PC-9 (cell line): ENCODE measurements at regions of chr12 and their contacts with region 1.

Region 1: DNA sequence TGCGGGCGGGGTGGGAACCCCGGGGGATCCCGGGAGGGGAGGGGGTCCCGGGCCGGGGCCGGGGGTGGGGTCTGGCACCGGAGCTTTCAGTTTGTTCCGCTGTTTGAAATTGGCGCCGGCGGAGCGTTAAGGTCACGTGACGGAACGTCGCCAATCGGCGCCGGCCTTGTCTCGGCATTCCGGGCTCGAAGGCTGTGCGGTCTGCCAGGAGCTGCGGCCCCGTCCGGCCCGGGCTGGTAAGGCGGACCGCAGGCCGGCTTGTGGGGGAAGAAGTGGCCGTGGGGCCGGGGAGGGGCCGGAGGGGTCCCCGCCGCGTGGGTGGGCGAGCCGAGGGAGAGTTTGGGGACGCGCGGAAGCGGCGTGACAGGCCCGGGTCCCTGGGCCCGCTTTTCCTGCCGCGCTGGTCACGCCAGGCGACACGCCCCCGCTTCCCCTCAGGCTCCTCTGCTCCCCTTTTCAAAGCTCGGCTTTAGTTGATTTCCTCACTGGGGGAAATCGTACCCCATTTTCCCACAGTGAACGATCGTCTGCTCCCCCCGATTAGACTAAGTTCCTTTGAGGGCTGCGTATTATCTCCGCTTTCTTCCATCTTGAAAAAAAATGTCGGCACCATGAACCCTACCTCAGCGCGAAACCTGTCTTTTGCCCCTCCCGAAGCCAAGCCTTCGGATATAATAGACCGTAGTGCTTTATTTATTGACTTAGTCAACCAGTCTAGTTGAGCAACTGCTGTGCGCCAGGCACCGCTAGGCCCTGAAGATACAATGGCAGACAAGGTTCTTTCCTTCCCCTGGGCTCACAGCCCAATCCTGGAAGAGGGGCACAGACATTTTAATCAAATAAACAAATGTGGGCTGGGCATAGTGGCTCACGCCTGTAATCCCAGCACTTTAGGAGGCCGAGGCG is at the starts of genes FOXM1 and RHNO1:
- DNase-seq: peak; percentile 90 to 94
- H3K4me3 ChIP-seq: peak within 1 kb of the TSS; percentile 71
- H3K27ac ChIP-seq: peak within 1 kb of the TSS; percentile 78
- H3K4me1 ChIP-seq: peaks cover 15% of the 10 kb centered on the region; the same call in 1 of the 2 replicates
- H3K27me3 ChIP-seq: no peaks in the 10 kb centered on the region
- CTCF ChIP-seq: no peak
- total RNA-seq, gene FOXM1: 161 and 225 TPM in 2 replicates
- total RNA-seq, gene RHNO1: 60.1 and 77.9 TPM in 2 replicates

Region 2: DNA sequence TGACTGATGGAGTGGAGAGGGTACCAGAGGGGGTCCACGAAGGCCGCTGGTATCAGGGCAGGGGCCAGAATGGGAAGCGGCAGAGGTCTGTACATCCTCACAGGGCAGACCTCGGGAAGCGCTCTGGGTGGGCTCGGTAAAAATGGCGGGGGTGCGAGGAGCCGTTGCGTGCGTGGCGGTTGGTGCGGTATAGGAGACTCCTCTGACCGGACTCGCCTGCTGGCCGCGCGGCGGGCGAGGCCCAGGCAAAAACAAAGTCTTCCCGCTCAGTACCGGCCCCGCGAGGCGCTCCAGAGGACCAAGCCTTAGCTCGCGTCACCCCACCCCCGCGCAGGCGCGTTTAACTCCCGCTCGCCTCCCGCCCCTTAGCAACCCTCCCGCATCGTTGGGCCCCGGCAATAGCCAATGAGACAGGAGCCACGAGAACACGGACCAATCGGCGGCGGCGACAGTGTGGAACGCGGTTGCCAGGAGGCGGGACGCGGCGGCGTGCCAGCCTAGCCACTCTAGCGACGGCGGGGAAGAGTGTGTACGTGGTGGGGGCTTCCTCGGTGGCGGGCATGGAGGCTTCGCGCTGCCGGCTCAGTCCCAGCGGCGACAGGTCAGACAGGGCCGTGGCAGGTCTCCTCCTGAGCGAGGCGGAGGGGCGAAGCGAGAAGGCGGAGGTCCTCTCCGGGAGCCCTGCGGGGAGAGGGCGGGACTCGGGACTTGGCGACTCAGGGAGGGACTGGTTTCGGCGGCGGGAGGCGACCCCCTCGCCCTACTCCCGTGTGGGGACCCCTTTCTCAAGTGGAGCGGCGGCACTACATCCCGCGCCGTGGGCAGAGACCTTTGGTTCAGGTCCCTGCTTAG is 13.3 kb after region 1 on chr12 and contains the start of gene TULP3:
- CTCF ChIA-PET with region 1: interaction called, 3 read pairs
- POLR2A ChIA-PET with region 1: no interaction called
- intact Hi-C with region 1: loop called (anchors 1 kb)
- DNase-seq: peak; percentile 93 to 99
- H3K4me3 ChIP-seq: peak within 1 kb of the TSS; percentile 80
- H3K27ac ChIP-seq: peak within 1 kb of the TSS; percentile 74
- H3K4me1 ChIP-seq: peaks cover 35% of the 10 kb centered on the region
- H3K27me3 ChIP-seq: no peaks in the 10 kb centered on the region
- CTCF ChIP-seq: no peak
- total RNA-seq, gene TULP3: 39.0 and 54.6 TPM in 2 replicates

Region 3: DNA sequence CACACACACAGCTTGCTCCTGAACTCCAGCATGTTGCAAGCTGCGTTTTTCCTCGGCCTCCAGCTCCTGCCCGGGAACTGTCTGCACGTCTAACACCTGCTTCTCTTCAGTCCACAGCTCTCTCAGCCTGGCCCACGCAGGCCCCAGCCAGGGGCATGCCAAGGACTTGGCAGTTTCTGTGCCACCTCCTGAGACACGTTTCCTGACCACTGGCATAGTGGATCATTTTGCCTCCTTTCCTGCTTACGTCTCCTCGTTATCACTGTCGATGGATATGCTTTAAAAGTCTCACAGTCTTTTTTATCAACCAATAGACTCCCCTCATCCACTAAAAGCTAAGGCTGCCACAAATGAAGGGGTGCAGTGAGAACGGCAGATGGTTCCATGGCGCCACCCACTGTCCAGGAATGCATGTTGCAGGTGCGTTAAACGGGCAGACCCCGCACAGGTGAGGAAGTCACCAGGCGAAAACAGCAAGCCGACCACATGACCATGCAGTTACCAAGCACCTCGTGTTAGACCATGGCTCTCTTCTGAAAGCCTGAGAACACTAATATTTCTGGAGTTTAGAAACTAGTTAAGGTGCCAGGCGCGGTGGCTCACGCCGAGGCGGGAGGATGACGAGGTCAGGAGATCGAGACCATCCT is 67.2 kb after region 1 on chr12:
- CTCF ChIA-PET with region 1: interaction called, 3 read pairs
- POLR2A ChIA-PET with region 1: interaction called, 3 read pairs
- intact Hi-C with region 1: loop called (anchors 5 kb)
- DNase-seq: peak; percentile 60 to 81
- H3K4me3 ChIP-seq: peak overlapping the region; percentile 45; the same call in 1 of the 2 replicates
- H3K27ac ChIP-seq: no peak overlapping the region
- H3K4me1 ChIP-seq: no peaks in the 10 kb centered on the region
- H3K27me3 ChIP-seq: no peaks in the 10 kb centered on the region
- CTCF ChIP-seq: peak; percentile 95

Region 4: GRCh38 chr12:2959505-2960389 is 82.4 kb after region 1 on chr12:
- CTCF ChIA-PET with region 1: no interaction called
- POLR2A ChIA-PET with region 1: no interaction called
- intact Hi-C with region 1: loop called (anchors 2 kb)
- DNase-seq: peak; percentile 41 to 67
- H3K4me3 ChIP-seq: peak overlapping the region; percentile 83
- H3K27ac ChIP-seq: peak overlapping the region; percentile 53
- H3K4me1 ChIP-seq: peaks cover 33% of the 10 kb centered on the region
- H3K27me3 ChIP-seq: no peaks in the 10 kb centered on the region
- CTCF ChIP-seq: no peak

Region 5: DNA sequence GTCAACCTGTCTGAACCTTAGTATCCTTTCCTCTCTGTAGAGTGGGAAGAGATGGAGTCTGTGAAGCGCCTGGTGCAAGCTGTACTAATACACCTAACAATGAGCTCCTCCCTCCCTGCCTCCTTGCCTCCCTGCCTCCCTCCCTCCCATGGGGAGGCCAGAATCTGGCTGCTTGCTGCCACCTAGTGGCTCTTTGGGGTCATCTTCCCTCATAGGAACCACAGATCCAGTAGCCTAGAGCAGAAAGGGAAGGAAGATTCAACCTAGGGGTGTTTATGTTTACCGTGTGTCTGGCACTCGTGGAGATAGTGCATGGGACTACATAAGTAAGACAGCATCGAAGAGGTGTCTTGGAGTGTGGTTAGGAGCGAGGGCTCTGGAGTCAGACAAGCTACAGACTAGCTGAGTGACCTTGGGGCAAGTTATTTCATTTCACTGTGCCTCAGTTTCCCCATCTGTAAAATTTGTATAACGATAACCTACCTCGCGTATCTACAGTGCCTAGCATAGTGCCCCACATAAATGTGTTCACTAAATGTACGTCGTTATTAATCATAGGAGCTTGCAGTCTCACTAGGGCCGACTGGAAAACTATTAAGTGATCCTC is 164.4 kb after region 1 on chr12:
- CTCF ChIA-PET with region 1: no interaction called
- POLR2A ChIA-PET with region 1: no interaction called
- intact Hi-C with region 1: loop called (anchors 5 kb)
- DNase-seq: peak; percentile 73 to 76
- H3K4me3 ChIP-seq: no peak overlapping the region
- H3K27ac ChIP-seq: no peak overlapping the region
- H3K4me1 ChIP-seq: no peaks in the 10 kb centered on the region
- H3K27me3 ChIP-seq: no peaks in the 10 kb centered on the region
- CTCF ChIP-seq: peak; percentile 87